Dendritic cell treated with granulocyte-macrophage colony-stimulating factor and Interleukin-4, amounts not matched to agents 40 ng/mL and 50 ng/mL, for 4 days (primary cell): ENCODE measurements at regions of chr5 and their contacts with region 1.

Region 1: GRCh38 chr5:112109331-112110007 is 309.6 kb downstream of the EPB41L4A start:
- H3K4me3 Mint-ChIP-seq: no peak overlapping the region
- H3K27ac Mint-ChIP-seq: no peak overlapping the region
- H3K4me1 Mint-ChIP-seq: peaks cover 30% of the 10 kb centered on the region
- H3K27me3 Mint-ChIP-seq: no peaks in the 10 kb centered on the region

Region 2: DNA sequence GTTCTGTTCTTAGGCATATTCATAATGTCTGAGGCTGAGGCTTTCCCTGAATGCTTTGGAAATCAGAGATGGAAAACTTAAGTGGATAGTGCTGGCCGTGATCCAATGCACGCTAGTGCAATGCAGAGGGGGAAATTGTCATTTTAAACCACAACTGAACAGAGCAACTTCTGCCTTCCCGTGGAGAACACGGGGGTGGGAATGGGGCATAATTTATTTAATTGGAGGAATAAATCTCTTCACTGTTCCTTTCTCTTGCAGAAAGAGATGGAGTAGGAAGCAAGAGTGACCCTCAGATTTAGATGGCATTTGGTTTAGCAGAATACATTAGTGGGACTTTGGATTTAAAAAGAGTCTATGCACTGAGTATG is 329.6 kb before region 1 on chr5:
- intact Hi-C with region 1: loop called (anchors 5 kb)
- H3K4me3 Mint-ChIP-seq: no peak overlapping the region
- H3K27ac Mint-ChIP-seq: no peak overlapping the region
- H3K4me1 Mint-ChIP-seq: peaks cover 35% of the 10 kb centered on the region
- H3K27me3 Mint-ChIP-seq: peaks cover 38% of the 10 kb centered on the region

Region 3: GRCh38 chr5:111929867-111930266 is 179.6 kb before region 1 on chr5:
- intact Hi-C with region 1: loop called (anchors 5 kb)
- H3K4me3 Mint-ChIP-seq: no peak overlapping the region
- H3K27ac Mint-ChIP-seq: no peak overlapping the region
- H3K4me1 Mint-ChIP-seq: peaks cover 30% of the 10 kb centered on the region
- H3K27me3 Mint-ChIP-seq: peaks cover 1% of the 10 kb centered on the region